Thyroid gland (tissue), 4 donors: ENCODE measurements at regions of chr5 and their contacts with region 1.

Region 1: DNA sequence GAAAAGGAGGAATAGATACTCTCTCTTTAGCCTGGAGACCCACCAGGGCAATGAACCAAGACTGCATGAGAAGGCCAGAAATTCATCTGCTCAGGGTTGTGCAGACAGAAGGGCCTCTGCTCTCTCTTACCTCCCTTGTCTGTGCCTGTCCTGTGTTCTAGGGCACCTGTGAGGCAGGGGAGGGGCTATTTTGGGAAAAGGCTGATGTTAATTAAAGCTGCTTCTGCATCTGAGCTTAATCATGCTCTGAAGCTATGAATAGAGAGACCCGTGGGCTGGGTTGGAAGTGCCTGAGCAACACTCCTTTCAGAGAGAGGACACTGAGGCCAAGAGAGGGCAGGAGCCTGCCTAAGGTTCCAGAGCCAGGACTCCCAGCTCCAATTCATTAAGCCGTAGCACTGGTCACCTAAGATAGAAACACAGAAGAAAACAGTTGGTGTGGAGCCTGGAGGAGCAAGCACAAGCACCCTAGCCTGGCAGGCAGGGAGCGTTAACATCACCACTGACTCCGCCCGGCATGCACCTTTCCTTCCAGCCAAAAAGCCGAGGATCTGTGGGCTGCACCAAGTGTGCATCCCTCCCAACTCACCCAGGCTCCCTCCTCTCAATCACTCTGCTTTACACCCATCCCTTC is 31.4 kb upstream of the STING1 start:
- DNase-seq: no peak
- H3K4me3 ChIP-seq: no peak overlapping the region
- H3K27ac ChIP-seq: no peak overlapping the region
- H3K4me1 ChIP-seq: peaks cover 9 to 11% of the 10 kb centered on the region in 2 donors
- H3K27me3 ChIP-seq: no peaks in the 10 kb centered on the region
- CTCF ChIP-seq: peak in 1 of 6 experiments; percentile 9
- POLR2A ChIP-seq: no peak

Region 2: GRCh38 chr5:139422307-139422893 is 91.6 kb before region 1 on chr5:
- intact Hi-C with region 1: loop called (anchors 2 kb)
- DNase-seq: peak in 1 of 2 donors; percentile 18
- H3K4me3 ChIP-seq: no peak overlapping the region
- H3K27ac ChIP-seq: no peak overlapping the region
- H3K4me1 ChIP-seq: peaks cover 10 to 13% of the 10 kb centered on the region in 2 donors
- H3K27me3 ChIP-seq: no peaks in the 10 kb centered on the region
- CTCF ChIP-seq: peak in 5 of 6 experiments; percentile 49 to 92 (median 83)
- POLR2A ChIP-seq: no peak

Region 3: GRCh38 chr5:139765409-139766217 is 251.6 kb after region 1 on chr5:
- intact Hi-C with region 1: no loop called
- DNase-seq: peak; percentile 68 to 77
- H3K4me3 ChIP-seq: peak overlapping the region in 1 of 3 donors; percentile 28
- H3K27ac ChIP-seq: no peak overlapping the region
- H3K4me1 ChIP-seq: peaks cover 0 to 3% of the 10 kb centered on the region in 2 donors
- H3K27me3 ChIP-seq: no peaks in the 10 kb centered on the region
- CTCF ChIP-seq: peak; percentile 94 to 100 (median 98)
- POLR2A ChIP-seq: no peak